Left cardiac atrium (tissue), 4 donors: ENCODE measurements at regions of chr21 and their contacts with region 1.

Region 1: DNA sequence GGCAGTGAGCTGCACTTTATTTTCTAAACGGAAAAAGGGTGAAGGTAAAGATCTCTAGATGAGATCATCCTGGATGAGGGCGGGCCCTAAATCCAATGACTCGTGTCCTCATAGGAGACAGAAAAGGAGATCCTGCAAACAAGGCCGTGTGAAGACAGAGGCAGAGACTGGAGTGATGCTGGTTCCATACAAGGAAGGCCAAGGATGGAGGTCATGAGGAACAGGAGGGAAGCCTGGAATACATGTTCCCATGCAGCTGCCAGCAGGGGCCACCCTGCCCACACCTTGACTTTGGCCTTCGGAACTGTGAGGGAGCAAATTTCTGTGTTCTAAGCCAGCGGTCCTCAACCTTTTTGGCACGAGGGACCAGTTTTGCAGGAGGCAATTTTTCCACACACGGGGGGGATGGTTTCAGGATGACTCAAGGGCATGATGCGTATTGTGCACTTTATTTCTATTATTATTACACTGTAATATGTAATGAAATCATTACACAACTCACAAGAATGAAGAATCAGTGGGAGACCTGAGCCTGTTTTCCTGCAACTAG is 94.3 kb downstream of the PSMG1 start:
- DNase-seq: no peak
- ATAC-seq: peak; percentile 5 to 8

Region 2: DNA sequence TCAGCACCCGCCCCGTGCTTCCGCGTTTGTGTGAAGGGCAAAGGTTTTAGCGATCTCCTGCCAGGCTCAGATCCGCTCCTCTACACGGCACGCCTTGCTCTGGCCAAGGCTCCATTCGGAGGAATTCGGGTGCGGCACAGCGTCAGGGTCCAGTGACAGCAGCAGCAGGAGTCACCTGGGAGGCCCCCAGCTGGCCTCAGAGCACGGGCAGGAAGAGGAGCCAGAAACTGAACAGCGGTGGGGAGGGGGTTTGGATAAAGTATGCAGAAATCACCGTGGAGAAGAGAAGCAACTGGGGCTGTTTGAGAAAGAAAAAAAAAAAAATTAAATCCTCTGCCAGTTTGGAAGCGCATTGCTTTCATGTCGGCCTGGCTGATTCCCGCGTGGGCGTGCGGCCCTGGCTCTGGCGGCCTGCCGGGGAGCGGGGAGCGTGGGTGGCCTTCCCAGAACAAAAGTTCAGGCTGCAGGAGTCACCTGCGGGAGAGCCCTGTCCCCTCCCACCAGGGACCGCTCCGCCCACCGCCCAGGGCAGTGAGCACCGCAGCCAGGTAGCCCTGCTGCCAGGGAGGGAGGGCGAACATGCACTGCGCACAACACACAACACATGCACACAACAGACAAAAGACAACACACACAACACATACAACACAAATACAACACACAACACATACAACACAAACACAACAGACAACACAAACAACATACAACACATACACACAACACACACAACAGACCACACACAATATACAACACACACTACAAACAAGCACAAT is 175.6 kb before region 1 on chr21:
- intact Hi-C with region 1: loop called in 1 of 2 experiments (anchors 5 kb)
- DNase-seq: peak; percentile 77
- ATAC-seq: peak; percentile 74 to 78